GM10248 (cell line): ENCODE measurements at regions of chr7 and their contacts with region 1.

Region 1: GRCh38 chr7:113421696-113422330 is 303.5 kb upstream of the SMIM30 start:
- DNase-seq: peak; percentile 53
- CTCF ChIP-seq: peak; percentile 90

Region 2: GRCh38 chr7:112550468-112551060 is 871.2 kb before region 1 on chr7:
- CTCF ChIA-PET with region 1: interaction called, 29 read pairs
- POLR2A ChIA-PET with region 1: no interaction called
- DNase-seq: peak; percentile 57
- CTCF ChIP-seq: peak; percentile 79

Region 3: DNA sequence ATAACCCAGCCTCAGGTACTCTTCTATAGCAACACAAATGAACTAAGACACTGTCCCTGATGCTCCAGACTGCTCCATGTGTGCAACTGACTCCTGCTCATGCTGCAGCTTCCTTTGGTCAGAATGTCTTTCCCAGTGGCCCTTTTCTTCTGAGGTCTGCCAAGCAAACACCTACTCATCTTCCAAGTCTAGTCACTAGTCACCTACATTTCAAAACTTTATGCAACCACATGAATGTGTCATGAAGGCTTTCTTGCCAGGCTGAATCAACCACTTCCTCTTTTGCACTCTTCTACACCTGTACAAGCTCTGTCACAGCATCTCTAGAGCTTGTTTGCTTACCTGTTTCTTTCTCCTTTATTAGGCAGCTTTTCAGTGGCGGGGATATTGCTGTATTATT is 865.2 kb before region 1 on chr7:
- CTCF ChIA-PET with region 1: interaction called, 10 read pairs
- POLR2A ChIA-PET with region 1: no interaction called
- DNase-seq: peak; percentile 31
- CTCF ChIP-seq: no peak

Region 4: DNA sequence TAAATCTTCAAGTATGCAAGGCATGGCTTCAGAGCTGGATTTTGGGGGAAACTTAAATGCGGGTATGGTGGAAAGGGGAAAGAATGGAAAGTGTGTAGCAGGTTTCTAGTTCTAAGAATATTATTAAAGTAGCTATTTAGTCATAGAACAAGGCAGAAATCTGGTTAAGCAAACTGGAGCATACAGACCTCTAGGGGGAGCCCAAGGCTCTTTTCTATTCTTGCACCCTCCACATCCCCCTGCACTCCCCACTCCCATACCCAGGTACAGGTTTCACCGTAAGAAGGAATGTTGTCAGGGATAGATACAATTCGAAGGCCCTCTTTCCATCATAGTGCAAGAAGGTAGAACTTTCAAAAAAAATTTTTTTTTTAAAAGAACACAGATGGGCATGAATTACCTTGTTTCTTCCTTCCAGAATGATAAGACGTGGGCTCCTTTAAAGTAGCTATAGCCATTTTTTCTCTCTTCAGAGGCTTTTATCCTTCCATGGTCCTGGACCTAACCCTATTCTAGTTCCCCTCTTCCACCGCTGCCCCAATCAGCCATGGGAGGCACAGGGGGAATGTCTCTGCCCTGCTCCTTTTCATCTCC is 262.0 kb before region 1 on chr7:
- CTCF ChIA-PET with region 1: interaction called, 13 read pairs
- POLR2A ChIA-PET with region 1: no interaction called
- DNase-seq: peak; percentile 35
- CTCF ChIP-seq: peak; percentile 37

Region 5: GRCh38 chr7:113404245-113404644 is 17.6 kb before region 1 on chr7:
- CTCF ChIA-PET with region 1: interaction called, 31 read pairs
- POLR2A ChIA-PET with region 1: no interaction called
- DNase-seq: peak; percentile 6
- CTCF ChIP-seq: no peak